Psoas muscle (tissue), 8 donors: ENCODE measurements at regions of chr13 and their contacts with region 1.

Region 1: DNA sequence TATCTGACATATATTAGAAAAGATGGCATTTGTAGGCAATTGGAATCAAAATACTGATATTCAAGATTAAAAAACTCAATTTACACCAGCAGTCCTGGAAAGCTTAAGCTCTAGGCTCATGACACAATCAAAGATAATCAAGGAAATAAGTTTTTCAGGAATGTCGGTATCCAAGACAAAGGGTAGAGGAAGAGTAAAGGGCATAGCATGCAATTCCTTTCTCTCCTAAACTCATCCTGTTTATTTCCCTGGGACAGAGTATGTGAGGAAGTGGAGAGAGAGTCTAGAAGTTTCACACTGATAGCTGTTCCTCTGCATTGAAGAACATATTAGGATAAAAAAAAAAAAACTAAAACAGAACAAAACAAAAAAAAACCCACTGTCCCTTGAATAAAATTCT is 2452.1 kb downstream of the PCDH9 start:
- DNase-seq: no peak
- ATAC-seq: no peak
- H3K4me3 ChIP-seq: no peak overlapping the region
- H3K27ac ChIP-seq: no peak overlapping the region
- H3K4me1 ChIP-seq: no peaks in the 10 kb centered on the region
- H3K27me3 ChIP-seq: no peaks in the 10 kb centered on the region
- CTCF ChIP-seq: no peak

Region 2: GRCh38 chr13:64510747-64511146 is 267.3 kb before region 1 on chr13:
- intact Hi-C with region 1: no loop called
- DNase-seq: no peak
- ATAC-seq: no peak
- H3K4me3 ChIP-seq: no peak overlapping the region
- H3K27ac ChIP-seq: no peak overlapping the region
- H3K4me1 ChIP-seq: no peaks in the 10 kb centered on the region
- H3K27me3 ChIP-seq: no peaks in the 10 kb centered on the region
- CTCF ChIP-seq: no peak

Region 3: GRCh38 chr13:64525687-64526086 is 252.3 kb before region 1 on chr13:
- intact Hi-C with region 1: no loop called
- DNase-seq: no peak
- ATAC-seq: no peak
- H3K4me3 ChIP-seq: no peak overlapping the region
- H3K27ac ChIP-seq: no peak overlapping the region
- H3K4me1 ChIP-seq: no peaks in the 10 kb centered on the region
- H3K27me3 ChIP-seq: no peaks in the 10 kb centered on the region
- CTCF ChIP-seq: no peak

Region 4: GRCh38 chr13:65085977-65086376 is 308.0 kb after region 1 on chr13:
- intact Hi-C with region 1: loop called in 1 of 2 experiments (anchors 5 kb)
- DNase-seq: no peak
- ATAC-seq: no peak
- H3K4me3 ChIP-seq: no peak overlapping the region
- H3K27ac ChIP-seq: no peak overlapping the region
- H3K4me1 ChIP-seq: no peaks in the 10 kb centered on the region
- H3K27me3 ChIP-seq: peaks cover 0 to 2% (median 0%) of the 10 kb centered on the region in 3 donors
- CTCF ChIP-seq: no peak